ENCODE measurements at regions of chr15 and their contacts with region 1.

Region 1: DNA sequence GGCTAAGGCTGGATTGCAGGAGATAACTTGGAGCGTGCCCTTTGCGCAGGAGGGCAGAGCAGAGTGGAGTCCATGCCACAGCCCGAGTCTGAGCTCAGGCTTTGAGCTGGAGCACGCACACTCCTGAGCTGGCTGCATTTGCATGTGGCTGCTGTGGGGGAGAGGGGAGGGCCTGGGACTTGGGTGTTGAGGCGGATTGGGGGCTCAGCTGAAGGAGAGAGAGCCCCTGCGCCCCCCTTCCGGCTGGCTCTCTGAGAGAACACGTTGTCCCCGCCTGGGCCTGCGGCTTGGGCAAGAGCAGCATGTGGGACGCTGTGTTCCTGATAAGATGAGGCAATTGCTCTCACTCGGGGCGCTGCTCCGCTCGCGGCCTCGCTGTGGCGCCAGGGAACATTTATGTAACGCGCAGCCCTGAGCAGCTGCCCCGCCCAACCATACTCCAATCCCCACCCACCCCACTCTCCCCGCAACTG is 39.1 kb downstream of the KLF13 start:
- DNase-seq: peak; percentile 86 to 92 (median 86)
- ATAC-seq: peak; percentile 97
- H3K4me3 ChIP-seq: no peak overlapping the region
- H3K27ac ChIP-seq: peak overlapping the region; percentile 84
- H3K4me1 ChIP-seq: peaks cover 39 to 48% of the 10 kb centered on the region in 2 experiments
- H3K27me3 ChIP-seq: no peaks in the 10 kb centered on the region
- CTCF ChIP-seq: peak; percentile 47 to 68 (median 66); a peak in 5 of 6 replicates
- EP300 ChIP-seq: no peak
- POLR2A ChIP-seq: peak; percentile 60
- RAD21 ChIP-seq: peak in 1 of 2 experiments; percentile 46; a peak in 2 of 4 replicates

Region 2: GRCh38 chr15:31292391-31293015 is 73.2 kb before region 1 on chr15:
- CTCF ChIA-PET with region 1: no interaction called
- POLR2A ChIA-PET with region 1: no interaction called
- in situ Hi-C with region 1: no loop called
- intact Hi-C with region 1: no loop called
- DNase-seq: no peak
- ATAC-seq: no peak
- H3K4me3 ChIP-seq: no peak overlapping the region
- H3K27ac ChIP-seq: no peak overlapping the region
- H3K4me1 ChIP-seq: no peaks in the 10 kb centered on the region; a peak in 1 of 5 replicates
- H3K27me3 ChIP-seq: peaks cover 8 to 19% of the 10 kb centered on the region in 2 experiments; a peak in 4 of 5 replicates
- CTCF ChIP-seq: no peak
- EP300 ChIP-seq: no peak
- POLR2A ChIP-seq: no peak
- RAD21 ChIP-seq: no peak

Region 3: GRCh38 chr15:31326156-31326732 is 39.4 kb before region 1 on chr15:
- CTCF ChIA-PET with region 1: no interaction called
- POLR2A ChIA-PET with region 1: no interaction called
- in situ Hi-C with region 1: no loop called
- intact Hi-C with region 1: loop called (anchors 5 kb)
- DNase-seq: peak; percentile 97 to 99 (median 98)
- ATAC-seq: peak; percentile 94
- H3K4me3 ChIP-seq: peak overlapping the region; percentile 69
- H3K27ac ChIP-seq: peak overlapping the region; percentile 77
- H3K4me1 ChIP-seq: peaks cover 3 to 39% of the 10 kb centered on the region in 2 experiments; a peak in 3 of 5 replicates
- H3K27me3 ChIP-seq: peaks cover 14% of the 10 kb centered on the region in 2 experiments; a peak in 4 of 5 replicates
- CTCF ChIP-seq: no peak
- EP300 ChIP-seq: no peak
- POLR2A ChIP-seq: peak; percentile 70
- RAD21 ChIP-seq: no peak

Region 4: DNA sequence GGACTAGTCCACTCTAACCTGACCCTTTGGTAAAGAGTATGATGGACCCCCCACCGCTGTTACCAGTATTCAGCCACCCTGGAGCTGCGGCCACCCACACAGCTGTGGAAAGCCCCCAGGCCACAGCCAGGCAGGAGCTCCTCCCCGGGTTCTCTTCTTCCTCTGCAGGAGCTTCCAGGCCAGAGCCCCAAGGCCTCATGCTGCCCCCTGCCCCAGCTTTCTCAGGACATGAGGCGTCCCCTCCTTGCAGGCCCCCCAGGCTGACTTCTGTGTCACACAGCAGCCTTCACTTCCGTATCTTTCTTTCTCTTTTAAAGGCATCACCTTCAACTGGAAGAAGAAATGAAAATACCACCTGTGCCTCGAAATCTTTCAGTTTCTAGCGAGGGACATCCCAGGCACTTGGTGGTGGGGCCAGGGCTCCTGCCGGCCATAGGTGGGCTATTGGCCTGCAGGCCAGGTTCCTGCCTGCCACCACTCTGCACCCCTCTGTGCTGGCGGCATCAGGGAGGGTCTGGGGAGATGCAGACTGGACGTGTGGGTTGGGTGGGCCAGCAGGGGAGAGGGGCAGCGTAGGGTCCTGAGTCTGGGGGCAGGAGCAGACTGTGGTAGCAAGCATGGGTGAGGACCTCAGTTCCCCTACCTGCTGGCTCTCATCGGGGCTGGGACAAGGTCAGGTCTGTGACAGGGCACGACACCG is 19.2 kb before region 1 on chr15:
- CTCF ChIA-PET with region 1: no interaction called
- POLR2A ChIA-PET with region 1: interaction called, 12 read pairs
- in situ Hi-C with region 1: no loop called
- intact Hi-C with region 1: no loop called
- DNase-seq: no peak
- ATAC-seq: no peak
- H3K4me3 ChIP-seq: no peak overlapping the region
- H3K27ac ChIP-seq: no peak overlapping the region
- H3K4me1 ChIP-seq: peaks cover 0 to 35% of the 10 kb centered on the region in 2 experiments; a peak in 2 of 5 replicates
- H3K27me3 ChIP-seq: peaks cover 0 to 22% of the 10 kb centered on the region in 2 experiments; a peak in 3 of 5 replicates
- CTCF ChIP-seq: no peak
- EP300 ChIP-seq: no peak
- POLR2A ChIP-seq: no peak
- RAD21 ChIP-seq: no peak

Measured in K562 (cell line).